Mammary epithelial cell (primary cell): ENCODE measurements at regions of chr1 and their contacts with region 1.

Region 1: DNA sequence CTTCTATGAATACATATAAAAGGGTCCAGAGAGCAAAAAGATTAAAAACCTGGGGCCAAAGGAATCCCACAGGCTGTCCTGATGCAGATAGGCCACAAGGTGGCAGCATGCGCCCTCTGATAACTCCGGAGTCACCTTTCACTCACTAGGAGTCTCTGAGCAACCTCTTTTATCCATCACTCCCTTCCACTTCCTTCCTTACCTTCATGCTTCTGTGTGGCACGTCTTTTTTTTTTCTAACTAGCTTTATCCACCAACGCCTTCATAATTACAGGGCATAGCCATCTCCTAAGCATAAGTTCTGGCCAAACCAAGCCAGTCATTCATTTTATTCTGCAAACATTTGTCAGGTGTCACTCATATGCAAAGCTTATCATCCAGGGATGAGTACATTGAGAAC is 3.9 kb upstream of the PGLYRP4 start:
- DNase-seq: peak; percentile 45
- H3K4me3 ChIP-seq: no peak overlapping the region
- H3K27ac ChIP-seq: no peak overlapping the region
- H3K4me1 ChIP-seq: peaks cover 12% of the 10 kb centered on the region
- H3K27me3 ChIP-seq: no peaks in the 10 kb centered on the region
- CTCF ChIP-seq: peak; percentile 85 to 95

Region 2: GRCh38 chr1:153210206-153210605 is 142.3 kb before region 1 on chr1:
- CTCF ChIA-PET with region 1: no interaction called
- dilution Hi-C with region 1: no loop called
- in situ Hi-C with region 1: no loop called
- intact Hi-C with region 1: no loop called
- DNase-seq: no peak
- H3K4me3 ChIP-seq: no peak overlapping the region
- H3K27ac ChIP-seq: no peak overlapping the region
- H3K4me1 ChIP-seq: no peaks in the 10 kb centered on the region
- H3K27me3 ChIP-seq: no peaks in the 10 kb centered on the region
- CTCF ChIP-seq: no peak

Region 3: GRCh38 chr1:153238536-153238935 is 114.0 kb before region 1 on chr1:
- CTCF ChIA-PET with region 1: no interaction called
- dilution Hi-C with region 1: no loop called
- in situ Hi-C with region 1: no loop called
- intact Hi-C with region 1: loop called (anchors 1 kb)
- DNase-seq: no peak
- H3K4me3 ChIP-seq: no peak overlapping the region
- H3K27ac ChIP-seq: no peak overlapping the region
- H3K4me1 ChIP-seq: no peaks in the 10 kb centered on the region
- H3K27me3 ChIP-seq: no peaks in the 10 kb centered on the region
- CTCF ChIP-seq: peak; percentile 23 to 49

Region 4: DNA sequence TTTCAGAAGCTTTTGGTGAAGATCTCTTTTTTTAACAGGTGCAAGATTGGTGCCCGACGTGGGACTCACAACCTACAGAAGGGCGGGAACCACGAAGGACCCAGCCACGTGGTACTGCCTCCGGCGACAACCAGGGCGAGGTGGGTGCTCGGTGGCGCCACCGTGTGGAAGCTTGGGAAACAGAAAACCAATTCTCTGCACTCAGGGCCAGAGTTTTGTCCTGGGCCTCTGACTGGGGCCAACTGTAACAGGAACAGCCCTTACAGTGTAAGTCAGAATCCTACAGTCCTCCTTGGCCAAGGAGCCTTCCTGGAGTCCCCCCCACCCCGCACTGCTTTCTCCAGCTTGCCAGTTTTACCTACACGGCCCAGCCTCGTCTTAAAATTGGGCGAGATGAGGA is 52.2 kb after region 1 on chr1:
- CTCF ChIA-PET with region 1: no interaction called
- dilution Hi-C with region 1: loop called (anchors 5 kb)
- in situ Hi-C with region 1: loop called in 1 of 2 experiments (anchors 10 kb)
- intact Hi-C with region 1: loop called (anchors 1 kb)
- DNase-seq: peak; percentile 25
- H3K4me3 ChIP-seq: no peak overlapping the region
- H3K27ac ChIP-seq: no peak overlapping the region
- H3K4me1 ChIP-seq: no peaks in the 10 kb centered on the region
- H3K27me3 ChIP-seq: peaks cover 2% of the 10 kb centered on the region
- CTCF ChIP-seq: peak; percentile 61 to 70

Region 5: GRCh38 chr1:153503766-153504478 is 151.4 kb after region 1 on chr1:
- CTCF ChIA-PET with region 1: interaction called, 7 read pairs
- dilution Hi-C with region 1: loop called (anchors 5 kb)
- in situ Hi-C with region 1: loop called in 1 of 2 experiments (anchors 5 kb)
- intact Hi-C with region 1: no loop called
- DNase-seq: no peak
- H3K4me3 ChIP-seq: no peak overlapping the region
- H3K27ac ChIP-seq: no peak overlapping the region
- H3K4me1 ChIP-seq: peaks cover 30% of the 10 kb centered on the region
- H3K27me3 ChIP-seq: no peaks in the 10 kb centered on the region
- CTCF ChIP-seq: no peak

Region 6: DNA sequence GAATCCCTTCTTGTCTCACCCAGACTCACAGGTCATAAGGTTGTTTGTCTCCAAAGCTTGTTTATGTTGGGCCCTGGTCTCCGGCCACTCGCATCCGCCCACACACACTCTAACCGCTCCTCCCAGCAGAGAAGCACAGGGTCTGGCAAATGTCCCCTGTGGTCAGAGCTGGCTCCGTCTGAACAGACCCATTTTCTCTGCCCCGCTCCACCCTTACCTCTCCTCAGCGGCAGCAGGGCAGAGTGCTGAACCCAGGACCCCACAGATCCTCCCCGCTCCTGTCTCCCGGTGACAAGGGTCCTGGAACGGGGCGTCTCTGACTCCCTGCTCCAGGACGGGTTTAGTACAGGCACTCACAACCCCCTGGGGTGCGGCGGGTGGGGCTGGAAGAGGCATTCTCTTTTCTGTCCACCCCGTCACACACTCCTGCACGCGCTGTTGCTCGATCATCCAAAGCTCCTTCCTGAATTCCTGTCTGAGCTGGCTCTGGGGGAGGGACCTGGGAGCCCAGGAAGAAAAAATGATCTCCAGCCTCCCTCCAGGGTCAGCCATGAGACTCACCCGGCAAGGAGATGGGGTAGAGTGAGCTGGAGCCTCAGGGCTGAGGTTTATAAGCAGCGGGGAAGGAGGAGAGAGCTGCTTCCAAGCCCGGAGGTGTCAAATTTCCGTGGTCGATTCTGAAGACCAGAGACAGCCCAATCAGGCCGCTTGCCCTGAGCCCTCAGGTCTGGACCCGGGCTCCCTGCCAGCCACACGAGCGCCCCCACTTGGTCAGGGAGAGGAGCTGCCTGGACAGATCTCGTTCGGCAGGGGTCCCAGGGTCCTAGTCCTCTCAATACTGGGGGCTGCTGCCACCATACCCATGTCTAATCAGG is 274.6 kb after region 1 on chr1 and contains the start of gene S100A13:
- CTCF ChIA-PET with region 1: no interaction called
- dilution Hi-C with region 1: no loop called
- in situ Hi-C with region 1: no loop called
- intact Hi-C with region 1: loop called (anchors 5 kb)
- DNase-seq: peak; percentile 93
- H3K4me3 ChIP-seq: peak within 1 kb of the TSS; percentile 57 to 69 (median 64)
- H3K27ac ChIP-seq: peak within 1 kb of the TSS; percentile 79
- H3K4me1 ChIP-seq: peaks cover 22% of the 10 kb centered on the region
- H3K27me3 ChIP-seq: no peaks in the 10 kb centered on the region
- CTCF ChIP-seq: peak; percentile 65 to 76
- total RNA-seq, gene S100A13: 72.0 to 213 TPM

Region 7: GRCh38 chr1:153990468-153991150 is 638.1 kb after region 1 on chr1 and contains the start of gene RPS27:
- CTCF ChIA-PET with region 1: no interaction called
- dilution Hi-C with region 1: no loop called
- in situ Hi-C with region 1: no loop called
- intact Hi-C with region 1: loop called (anchors 10 kb)
- DNase-seq: peak; percentile 95
- H3K4me3 ChIP-seq: peak within 1 kb of the TSS; percentile 75 to 78 (median 77)
- H3K27ac ChIP-seq: peak within 1 kb of the TSS; percentile 93
- H3K4me1 ChIP-seq: peaks cover 21% of the 10 kb centered on the region
- H3K27me3 ChIP-seq: no peaks in the 10 kb centered on the region
- CTCF ChIP-seq: no peak
- total RNA-seq, gene RPS27: 1,002 to 1,257 TPM